Right cardiac atrium (tissue), 5 donors: ENCODE measurements at regions of chr13 and their contacts with region 1.

Region 1: GRCh38 chr13:23871616-23872220 is 17.5 kb downstream of the MIPEP start:
- DNase-seq: no peak
- ATAC-seq: peak in 1 of 2 donors; percentile 40
- H3K4me3 ChIP-seq: no peak overlapping the region
- H3K27ac ChIP-seq: no peak overlapping the region
- H3K4me1 ChIP-seq: peaks cover 2% of the 10 kb centered on the region
- H3K27me3 ChIP-seq: no peaks in the 10 kb centered on the region

Region 2: DNA sequence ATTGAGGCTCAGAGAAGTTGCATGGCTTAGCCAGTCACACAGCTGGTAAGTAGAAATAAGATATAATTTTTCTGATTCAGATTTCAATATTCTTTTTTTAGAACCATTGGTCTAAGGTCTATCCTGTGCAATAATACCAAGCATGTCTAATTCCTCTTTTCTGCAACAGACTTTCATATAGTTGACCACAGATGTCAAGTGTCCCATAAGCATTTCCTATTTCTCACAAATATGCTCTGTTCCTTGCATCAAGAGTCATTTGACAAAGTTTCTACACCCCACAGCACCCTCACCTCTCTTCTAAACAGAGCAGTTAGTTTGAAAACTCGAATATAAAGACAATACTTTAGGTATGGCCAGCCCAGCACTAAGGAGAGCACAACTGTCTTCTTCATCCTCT is 411.4 kb before region 1 on chr13:
- intact Hi-C with region 1: loop called in 2 of 4 experiments (anchors 5 to 10 kb)
- DNase-seq: no peak
- ATAC-seq: no peak
- H3K4me3 ChIP-seq: no peak overlapping the region
- H3K27ac ChIP-seq: no peak overlapping the region
- H3K4me1 ChIP-seq: no peaks in the 10 kb centered on the region
- H3K27me3 ChIP-seq: no peaks in the 10 kb centered on the region

Region 3: DNA sequence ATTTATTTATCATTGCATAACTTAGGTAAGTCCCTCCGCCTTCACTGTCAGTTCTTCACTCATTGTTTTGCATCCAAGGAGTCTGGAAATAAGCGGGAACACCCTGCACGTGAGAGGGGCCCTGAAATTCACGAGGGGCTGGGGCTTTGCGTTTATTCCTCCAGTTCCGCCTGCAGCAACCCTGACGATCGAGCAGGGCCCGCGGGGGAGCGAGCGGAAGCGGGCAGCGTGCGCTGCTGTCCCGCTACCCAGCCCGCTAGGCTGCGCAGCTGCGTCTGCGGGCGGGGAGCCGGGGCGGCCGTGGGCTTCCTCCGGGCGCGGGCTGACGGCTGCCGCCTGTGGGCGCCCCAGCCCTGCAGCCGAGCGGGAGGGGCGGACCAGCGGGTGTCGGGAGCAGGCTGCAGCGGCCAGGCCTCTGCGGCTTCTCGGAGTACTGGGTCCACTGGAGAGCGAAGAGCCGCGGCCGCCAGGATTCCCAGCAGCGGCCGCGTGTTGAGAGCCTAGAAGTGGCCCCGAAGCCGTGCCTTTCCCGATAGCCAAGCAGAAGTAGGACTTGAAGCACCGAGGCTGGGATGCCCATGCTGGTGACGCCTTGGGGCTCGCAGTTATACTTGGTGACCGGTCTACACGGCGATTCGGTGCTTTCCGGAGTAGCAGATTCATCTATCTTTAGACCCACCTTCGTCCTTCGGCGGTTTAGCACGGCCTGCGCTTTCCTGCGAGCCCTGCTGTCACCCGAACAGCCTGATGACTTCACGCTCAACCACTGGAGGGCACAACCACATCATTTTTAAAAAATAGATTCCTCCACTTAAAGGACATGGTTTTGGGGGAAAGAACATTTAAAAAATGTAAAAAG is 405.3 kb before region 1 on chr13:
- intact Hi-C with region 1: loop called in 3 of 4 experiments (anchors 2 to 10 kb)
- DNase-seq: peak; percentile 73 to 88 (median 85)
- ATAC-seq: peak; percentile 94 to 95
- H3K4me3 ChIP-seq: peak overlapping the region; percentile 12
- H3K27ac ChIP-seq: peak overlapping the region; percentile 33
- H3K4me1 ChIP-seq: peaks cover 2% of the 10 kb centered on the region
- H3K27me3 ChIP-seq: no peaks in the 10 kb centered on the region

Region 4: GRCh38 chr13:23707674-23708073 is 164.0 kb before region 1 on chr13:
- intact Hi-C with region 1: loop called in 1 of 4 experiments (anchors 10 kb)
- DNase-seq: no peak
- ATAC-seq: no peak
- H3K4me3 ChIP-seq: no peak overlapping the region
- H3K27ac ChIP-seq: no peak overlapping the region
- H3K4me1 ChIP-seq: peaks cover 1% of the 10 kb centered on the region
- H3K27me3 ChIP-seq: no peaks in the 10 kb centered on the region

Region 5: GRCh38 chr13:23715762-23716235 is 155.9 kb before region 1 on chr13:
- intact Hi-C with region 1: loop called in 3 of 4 experiments (anchors 5 to 10 kb)
- DNase-seq: peak in 2 of 3 donors; percentile 65
- ATAC-seq: peak; percentile 47 to 66
- H3K4me3 ChIP-seq: no peak overlapping the region
- H3K27ac ChIP-seq: no peak overlapping the region
- H3K4me1 ChIP-seq: no peaks in the 10 kb centered on the region
- H3K27me3 ChIP-seq: no peaks in the 10 kb centered on the region

Region 6: GRCh38 chr13:23723471-23723870 is 148.2 kb before region 1 on chr13:
- intact Hi-C with region 1: loop called in 3 of 4 experiments (anchors 5 to 10 kb)
- DNase-seq: no peak
- ATAC-seq: peak; percentile 36 to 72
- H3K4me3 ChIP-seq: no peak overlapping the region
- H3K27ac ChIP-seq: no peak overlapping the region
- H3K4me1 ChIP-seq: peaks cover 8% of the 10 kb centered on the region
- H3K27me3 ChIP-seq: no peaks in the 10 kb centered on the region